Right lobe of liver (tissue), 6 donors: ENCODE measurements at regions of chr1 and their contacts with region 1.

Region 1: GRCh38 chr1:19232526-19232851 is 18.8 kb downstream of the EMC1 start:
- DNase-seq: peak; percentile 52 to 88 (median 78)
- ATAC-seq: peak; percentile 95 to 98 (median 96)
- H3K4me3 ChIP-seq: no peak overlapping the region
- H3K27ac ChIP-seq: peak overlapping the region in 2 of 3 donors; percentile 21 to 53
- H3K4me1 ChIP-seq: peaks cover 0 to 11% (median 0%) of the 10 kb centered on the region in 4 donors
- H3K27me3 ChIP-seq: no peaks in the 10 kb centered on the region
- CTCF ChIP-seq: peak in 3 of 4 donors; percentile 14 to 36 (median 21)
- POLR2A ChIP-seq: no peak

Region 2: DNA sequence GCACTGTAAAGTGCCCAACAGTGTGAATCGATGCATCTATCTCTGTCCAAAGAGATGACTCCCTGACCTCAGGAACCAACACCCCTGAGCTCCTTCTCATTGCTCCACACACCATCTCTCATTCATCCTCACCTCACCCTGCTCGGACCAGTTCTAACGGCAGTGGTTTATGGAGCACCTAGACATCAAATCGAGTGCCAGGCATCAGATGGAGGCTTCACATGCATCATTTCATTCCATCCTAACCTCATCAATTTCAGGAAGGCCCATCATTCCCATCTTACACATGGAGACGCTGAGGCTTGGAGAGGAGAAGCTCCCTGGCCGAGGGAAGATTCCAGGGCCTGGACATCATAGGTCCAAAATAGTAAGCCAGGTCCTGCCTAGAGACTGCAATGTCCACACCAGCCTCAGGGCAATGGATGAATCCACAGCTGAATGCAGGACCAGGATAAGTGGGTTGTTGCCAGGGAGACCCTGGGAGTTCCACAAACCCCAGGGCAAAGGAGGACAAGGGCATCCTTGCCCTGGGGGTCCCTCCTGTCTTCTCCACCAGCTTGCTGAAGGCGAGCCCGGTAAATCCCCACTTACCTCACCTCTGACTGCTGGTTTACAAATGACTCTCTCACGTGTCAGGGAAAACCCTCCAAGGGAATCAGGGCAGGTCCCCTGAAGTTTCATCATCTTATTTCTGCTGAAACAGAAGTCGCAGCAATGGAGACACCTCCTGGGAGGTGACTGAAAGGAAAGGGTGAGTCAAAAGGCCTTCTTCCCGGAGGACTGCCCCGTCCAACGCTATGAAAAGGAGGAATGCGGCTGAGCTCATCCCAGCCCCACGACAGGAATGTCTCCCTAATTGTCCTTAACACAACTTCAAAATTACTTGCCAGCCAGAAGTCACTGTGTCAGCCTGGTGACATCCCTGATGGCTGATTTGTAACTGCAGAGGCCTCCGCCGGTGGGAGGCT is 267.0 kb before region 1 on chr1:
- intact Hi-C with region 1: no loop called
- DNase-seq: no peak
- ATAC-seq: no peak
- H3K4me3 ChIP-seq: no peak overlapping the region
- H3K27ac ChIP-seq: no peak overlapping the region
- H3K4me1 ChIP-seq: peaks cover 0 to 16% (median 0%) of the 10 kb centered on the region in 4 donors
- H3K27me3 ChIP-seq: no peaks in the 10 kb centered on the region
- CTCF ChIP-seq: no peak
- POLR2A ChIP-seq: no peak

Region 3: GRCh38 chr1:19044975-19045831 is 187.3 kb before region 1 on chr1:
- intact Hi-C with region 1: no loop called
- DNase-seq: peak; percentile 18 to 48 (median 46)
- ATAC-seq: no peak
- H3K4me3 ChIP-seq: no peak overlapping the region
- H3K27ac ChIP-seq: peak overlapping the region; percentile 59 to 87 (median 63)
- H3K4me1 ChIP-seq: peaks cover 0 to 41% (median 16%) of the 10 kb centered on the region in 4 donors
- H3K27me3 ChIP-seq: no peaks in the 10 kb centered on the region
- CTCF ChIP-seq: no peak
- POLR2A ChIP-seq: no peak

Region 4: DNA sequence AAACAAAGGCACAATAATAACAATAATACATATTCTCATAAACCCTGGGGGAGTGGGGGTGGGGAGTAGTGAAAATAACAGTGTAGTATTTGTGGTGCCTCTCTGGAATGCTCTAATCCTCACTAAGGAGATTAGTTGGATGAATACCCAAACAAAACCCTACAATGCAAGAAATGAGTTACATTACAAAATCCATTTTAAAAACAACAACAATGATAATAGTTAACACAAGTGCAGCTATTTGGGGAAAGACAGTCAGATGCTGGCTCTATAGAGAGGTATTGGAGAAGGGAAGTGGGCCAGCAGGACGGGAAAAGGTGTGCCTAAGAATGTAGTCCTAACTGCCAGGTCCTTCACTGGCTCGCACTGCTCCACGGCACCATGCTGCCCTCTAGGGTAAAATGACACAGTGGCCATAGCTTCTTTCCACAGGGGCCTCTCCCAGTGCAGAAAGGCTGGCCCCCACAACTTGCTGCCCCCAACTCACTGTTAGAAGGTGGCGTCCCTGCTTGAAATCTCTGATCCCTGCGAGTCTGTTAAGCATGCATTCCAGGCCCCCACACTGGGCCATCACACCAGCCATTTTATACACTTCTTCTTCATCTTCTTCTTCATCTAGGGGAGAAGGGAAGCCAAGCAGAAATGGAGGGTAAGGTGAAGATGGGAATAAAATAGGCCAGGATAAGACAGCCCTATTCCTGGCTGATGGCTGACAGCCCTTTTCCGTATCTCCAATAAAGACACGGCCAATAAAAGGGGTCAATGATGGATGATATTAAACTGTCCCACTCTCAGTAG is 136.3 kb before region 1 on chr1:
- intact Hi-C with region 1: no loop called
- DNase-seq: peak in 1 of 3 donors; percentile 58
- ATAC-seq: peak; percentile 87 to 92 (median 89)
- H3K4me3 ChIP-seq: no peak overlapping the region
- H3K27ac ChIP-seq: no peak overlapping the region
- H3K4me1 ChIP-seq: peaks cover 0 to 12% (median 5%) of the 10 kb centered on the region in 4 donors
- H3K27me3 ChIP-seq: no peaks in the 10 kb centered on the region
- CTCF ChIP-seq: peak; percentile 47 to 67 (median 64)
- POLR2A ChIP-seq: no peak

Region 5: DNA sequence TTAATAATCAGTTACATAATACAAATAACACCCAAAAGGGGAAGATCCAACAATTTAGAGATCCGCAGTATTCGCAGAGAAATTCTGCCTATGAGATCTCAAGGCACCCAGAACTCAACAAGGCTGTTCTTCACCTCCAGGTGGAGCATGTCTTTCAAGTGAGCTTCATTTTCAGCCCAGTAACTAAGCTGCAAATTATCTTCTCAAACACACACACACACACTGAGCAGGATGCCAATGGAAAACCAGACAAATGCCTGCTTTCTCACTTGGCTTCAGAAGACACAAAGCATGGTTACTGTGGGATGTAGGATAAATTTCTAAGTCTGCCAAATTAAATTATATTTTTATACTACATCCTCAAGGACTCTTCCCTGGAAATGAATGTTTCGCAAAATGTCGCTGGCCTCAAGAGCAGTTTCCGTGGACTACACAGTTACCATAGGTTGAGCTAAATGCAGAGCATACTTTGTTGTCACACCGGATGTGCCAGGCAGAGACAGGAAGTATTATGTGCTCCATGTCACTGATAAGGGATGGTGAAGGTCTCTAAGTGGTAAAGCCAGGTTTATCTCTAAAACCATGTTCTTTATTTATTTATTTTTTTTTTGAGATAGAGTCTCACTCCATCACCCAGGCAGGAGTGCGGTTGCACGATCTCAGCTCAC is 52.8 kb before region 1 on chr1:
- intact Hi-C with region 1: loop called in 1 of 2 experiments (anchors 10 kb)
- DNase-seq: no peak
- ATAC-seq: peak; percentile 74 to 86 (median 81)
- H3K4me3 ChIP-seq: no peak overlapping the region
- H3K27ac ChIP-seq: peak overlapping the region in 2 of 3 donors; percentile 69 to 76
- H3K4me1 ChIP-seq: peaks cover 0 to 35% (median 14%) of the 10 kb centered on the region in 4 donors
- H3K27me3 ChIP-seq: no peaks in the 10 kb centered on the region
- CTCF ChIP-seq: peak; percentile 28 to 53 (median 37)
- POLR2A ChIP-seq: no peak